ENCODE measurements at regions of chr5 and their contacts with region 1.

Region 1: DNA sequence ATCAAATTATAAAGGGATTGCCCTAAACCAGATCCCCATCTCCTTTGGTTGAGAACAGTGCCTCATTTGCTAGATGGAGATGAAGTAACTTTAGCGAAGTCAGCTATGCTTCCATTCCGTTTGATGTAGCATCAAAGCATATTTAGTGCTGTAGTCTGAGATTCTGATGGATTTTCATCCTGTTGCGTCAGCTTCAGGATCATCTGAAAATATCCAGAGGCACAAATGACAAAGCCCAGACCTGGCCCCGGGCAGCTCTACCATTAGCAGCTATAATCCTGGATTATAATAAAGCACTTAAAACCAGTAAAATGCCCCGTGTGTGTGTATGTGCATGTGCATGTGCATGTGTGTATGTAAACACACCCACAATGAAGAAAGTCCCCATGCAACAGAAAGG is 44.7 kb downstream of the ERAP1 start:
- DNase-seq: no peak
- ATAC-seq: no peak
- H3K4me3 ChIP-seq: no peak overlapping the region
- H3K27ac ChIP-seq: no peak overlapping the region
- H3K4me1 ChIP-seq: peaks cover 0 to 9% (median 0%) of the 10 kb centered on the region in 9 donors
- H3K27me3 ChIP-seq: no peaks in the 10 kb centered on the region
- CTCF ChIP-seq: no peak

Region 2: DNA sequence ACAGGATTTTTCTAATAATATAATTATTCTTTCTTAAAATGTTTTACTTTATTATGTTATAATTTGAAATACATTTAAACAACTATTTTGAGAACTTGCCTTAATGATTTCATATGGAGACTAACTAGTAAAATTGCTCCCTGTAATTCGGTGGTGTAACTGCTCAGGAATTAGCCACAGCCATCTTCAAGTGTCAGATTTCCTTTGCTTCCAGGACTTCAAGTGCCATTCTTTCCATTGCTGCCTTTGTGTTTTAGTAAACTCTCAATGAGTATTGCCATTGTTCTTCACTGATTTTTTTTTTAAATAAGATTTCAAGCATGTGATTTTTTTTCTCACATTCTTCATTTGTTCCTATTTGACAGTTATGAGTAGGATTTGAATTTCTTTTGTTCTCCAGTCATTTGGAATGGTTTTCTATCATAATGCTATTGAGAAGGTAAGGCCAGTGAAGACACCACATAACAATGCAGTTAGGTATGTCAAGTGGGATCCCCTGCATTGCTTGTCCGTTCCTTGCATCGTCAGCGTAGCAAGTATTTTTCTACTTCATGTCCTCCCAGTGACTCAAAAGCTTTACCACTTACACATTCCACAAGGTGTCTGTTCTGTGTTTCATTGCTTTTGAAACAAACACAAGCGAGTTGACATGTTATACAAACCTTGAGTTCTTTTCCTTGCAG is 256.6 kb after region 1 on chr5:
- intact Hi-C with region 1: loop called in 2 of 10 experiments (anchors 10 kb)
- DNase-seq: no peak
- ATAC-seq: no peak
- H3K4me3 ChIP-seq: no peak overlapping the region
- H3K27ac ChIP-seq: no peak overlapping the region
- H3K4me1 ChIP-seq: no peaks in the 10 kb centered on the region
- H3K27me3 ChIP-seq: no peaks in the 10 kb centered on the region
- CTCF ChIP-seq: no peak